Activated B cell treated with CpG ODN at 0.5 μM for 24 hours (primary cell): ENCODE measurements at regions of chr12 and their contacts with region 1.

Region 1: DNA sequence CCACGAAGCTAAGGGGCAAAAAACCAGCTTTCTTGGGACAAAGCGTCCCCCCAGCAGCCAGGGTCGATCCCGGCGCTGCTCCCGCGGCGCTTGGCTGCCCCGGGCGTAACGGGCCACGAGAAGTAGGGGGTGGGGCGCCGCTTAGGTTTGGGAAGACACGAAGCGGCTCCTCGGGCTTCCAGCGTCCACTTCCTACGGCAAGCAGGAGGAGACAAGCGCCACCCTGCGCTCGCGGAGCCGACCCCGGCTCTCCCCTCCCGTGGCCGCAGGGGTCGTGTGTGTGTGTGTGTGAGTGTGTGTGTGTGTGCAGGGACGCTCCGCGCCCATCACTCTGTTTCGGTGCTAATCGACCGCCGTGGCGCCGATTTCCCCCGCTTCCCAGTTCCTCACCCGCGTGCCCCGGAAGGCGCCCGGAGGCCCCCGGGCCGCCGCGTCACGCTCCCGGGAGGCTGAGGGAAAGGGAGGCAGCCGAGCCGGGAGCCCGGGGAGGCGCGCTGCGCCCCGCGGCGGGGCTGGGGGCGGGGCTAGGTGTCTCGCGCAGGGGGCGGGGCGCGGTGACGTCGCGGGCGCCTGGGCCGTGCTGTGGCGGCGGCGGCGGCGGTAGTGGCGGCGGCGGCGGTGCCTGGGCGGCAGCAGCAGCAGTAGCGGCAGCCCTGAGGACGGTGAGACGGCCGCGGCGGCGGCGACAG is at the start of gene ERC1:
- DNase-seq: peak; percentile 94
- ATAC-seq: peak; percentile 89
- H3K4me3 Mint-ChIP-seq: peak within 1 kb of the TSS; percentile 95
- H3K27ac Mint-ChIP-seq: peak within 1 kb of the TSS; percentile 91
- H3K4me1 Mint-ChIP-seq: peaks cover 29% of the 10 kb centered on the region
- H3K27me3 Mint-ChIP-seq: no peaks in the 10 kb centered on the region
- CTCF ChIP-seq: no peak
- total RNA-seq, gene ERC1: 51.1 and 57.0 TPM in 2 replicates

Region 2: DNA sequence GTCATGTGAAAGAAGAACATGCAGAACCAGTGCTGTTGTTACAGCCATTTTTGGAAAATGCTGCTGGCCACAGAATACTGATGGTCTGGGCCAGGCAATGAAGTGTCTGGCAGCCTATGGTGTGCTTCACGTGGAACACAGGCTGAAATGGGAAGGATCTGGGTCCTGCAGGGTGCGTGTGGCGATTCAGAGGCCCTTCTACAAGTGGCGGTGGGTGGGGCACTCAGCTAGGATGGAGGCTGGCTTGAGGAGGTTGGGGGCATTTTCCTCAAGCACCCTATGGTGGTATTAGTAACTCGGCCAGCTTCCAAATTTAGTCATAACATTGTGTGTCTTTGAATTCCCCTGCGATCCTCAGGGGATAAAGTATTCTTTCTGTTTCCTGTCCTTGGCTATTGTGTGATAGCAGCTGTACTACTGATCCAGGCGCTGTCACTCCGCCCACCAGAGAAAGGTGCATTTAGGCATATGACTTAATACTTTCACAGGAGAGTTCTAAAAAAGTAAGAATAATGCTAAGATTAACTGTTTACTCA is 32.1 kb before region 1 on chr12:
- CTCF ChIA-PET with region 1: no interaction called
- POLR2A ChIA-PET with region 1: interaction called, 6 read pairs
- intact Hi-C with region 1: loop called (anchors 2 kb)
- DNase-seq: no peak
- ATAC-seq: peak; percentile 92
- H3K4me3 Mint-ChIP-seq: peak overlapping the region; percentile 4
- H3K27ac Mint-ChIP-seq: peak overlapping the region; percentile 20
- H3K4me1 Mint-ChIP-seq: peaks cover 8% of the 10 kb centered on the region
- H3K27me3 Mint-ChIP-seq: no peaks in the 10 kb centered on the region
- CTCF ChIP-seq: no peak

Region 3: DNA sequence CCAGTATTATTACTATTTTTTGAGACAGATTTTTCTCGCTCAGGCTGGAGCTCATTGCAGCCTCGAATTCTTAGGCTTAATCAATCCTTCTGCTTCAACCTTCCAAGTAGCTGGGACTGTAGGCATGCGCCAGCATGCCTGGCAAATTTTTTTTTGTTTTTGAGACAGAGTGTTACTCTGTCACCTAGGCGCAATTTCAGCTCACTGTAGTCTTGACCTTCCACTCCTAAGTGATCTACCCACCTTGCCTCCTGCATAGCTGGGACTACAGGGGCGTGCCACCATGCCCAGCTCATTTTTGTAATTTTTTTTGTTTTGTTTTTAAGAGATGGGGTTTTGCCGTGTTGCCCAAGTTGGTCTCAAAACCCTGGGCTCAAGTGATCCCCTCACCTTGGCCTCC is 15.4 kb after region 1 on chr12:
- CTCF ChIA-PET with region 1: no interaction called
- POLR2A ChIA-PET with region 1: no interaction called
- intact Hi-C with region 1: no loop called
- DNase-seq: no peak
- ATAC-seq: no peak
- H3K4me3 Mint-ChIP-seq: no peak overlapping the region
- H3K27ac Mint-ChIP-seq: no peak overlapping the region
- H3K4me1 Mint-ChIP-seq: no peaks in the 10 kb centered on the region
- H3K27me3 Mint-ChIP-seq: no peaks in the 10 kb centered on the region
- CTCF ChIP-seq: no peak